Caco-2 (cell line): ENCODE measurements at regions of chr22 and their contacts with region 1.

Region 1: GRCh38 chr22:28930357-28931007 is 47.1 kb downstream of the ZNRF3 start:
- DNase-seq: no peak
- H3K4me3 ChIP-seq: no peak overlapping the region
- H3K4me3 Mint-ChIP-seq: peak overlapping the region; percentile 6
- H3K27ac Mint-ChIP-seq: no peak overlapping the region
- H3K4me1 ChIP-seq: peaks cover 80% of the 10 kb centered on the region
- H3K4me1 Mint-ChIP-seq: peaks cover 77% of the 10 kb centered on the region
- H3K27me3 ChIP-seq: no peaks in the 10 kb centered on the region
- H3K27me3 Mint-ChIP-seq: no peaks in the 10 kb centered on the region
- CTCF ChIP-seq: no peak

Region 2: DNA sequence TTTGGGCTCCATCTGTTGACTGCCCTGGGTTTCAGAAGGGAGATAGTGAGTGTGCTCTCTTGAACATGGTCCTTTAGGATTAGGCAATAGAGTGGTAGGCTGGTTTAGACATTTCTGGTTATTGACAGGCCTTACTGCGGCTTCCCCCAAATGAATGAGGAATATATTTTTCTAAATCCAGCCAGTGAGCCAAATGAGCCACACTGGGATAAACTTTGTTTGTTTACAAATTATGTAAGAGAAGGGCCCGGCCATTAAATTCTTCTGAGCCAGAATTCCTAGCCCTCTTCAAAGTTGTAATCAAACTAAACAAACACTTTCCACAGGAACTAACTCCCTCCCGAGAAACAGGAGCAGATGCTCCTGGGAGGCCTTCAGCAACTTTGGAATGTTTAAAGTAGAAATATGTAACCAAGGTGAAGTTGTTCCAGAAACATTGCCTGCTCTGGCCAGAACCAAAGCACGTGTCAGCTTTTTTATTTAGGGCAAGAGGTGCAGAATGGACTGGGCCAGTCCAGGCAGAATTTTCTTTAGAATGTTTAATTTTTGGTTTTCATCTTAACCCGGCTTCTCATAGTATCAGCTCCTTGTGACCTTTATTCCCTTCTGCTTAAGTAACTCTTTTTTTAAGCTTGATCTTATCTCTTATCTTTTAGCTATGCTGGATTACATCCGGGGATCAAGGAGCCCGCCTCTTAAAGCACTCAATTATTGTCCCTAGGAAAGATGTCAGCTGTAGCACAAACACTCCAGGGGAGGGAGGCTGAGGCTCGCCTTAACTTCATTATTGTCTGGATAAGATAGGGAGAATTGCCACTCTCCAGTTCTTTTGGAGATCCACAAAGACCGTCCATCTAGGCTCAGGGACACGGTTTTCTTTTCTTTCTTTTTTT is 18.5 kb before region 1 on chr22:
- CTCF ChIA-PET with region 1: no interaction called
- POLR2A ChIA-PET with region 1: no interaction called
- intact Hi-C with region 1: loop called (anchors 1 kb)
- DNase-seq: peak; percentile 87 to 94
- H3K4me3 ChIP-seq: no peak overlapping the region
- H3K4me3 Mint-ChIP-seq: peak overlapping the region; percentile 59
- H3K27ac Mint-ChIP-seq: peak overlapping the region; percentile 91
- H3K4me1 ChIP-seq: peaks cover 75% of the 10 kb centered on the region
- H3K4me1 Mint-ChIP-seq: peaks cover 52% of the 10 kb centered on the region
- H3K27me3 ChIP-seq: no peaks in the 10 kb centered on the region
- H3K27me3 Mint-ChIP-seq: no peaks in the 10 kb centered on the region
- CTCF ChIP-seq: no peak

Region 3: DNA sequence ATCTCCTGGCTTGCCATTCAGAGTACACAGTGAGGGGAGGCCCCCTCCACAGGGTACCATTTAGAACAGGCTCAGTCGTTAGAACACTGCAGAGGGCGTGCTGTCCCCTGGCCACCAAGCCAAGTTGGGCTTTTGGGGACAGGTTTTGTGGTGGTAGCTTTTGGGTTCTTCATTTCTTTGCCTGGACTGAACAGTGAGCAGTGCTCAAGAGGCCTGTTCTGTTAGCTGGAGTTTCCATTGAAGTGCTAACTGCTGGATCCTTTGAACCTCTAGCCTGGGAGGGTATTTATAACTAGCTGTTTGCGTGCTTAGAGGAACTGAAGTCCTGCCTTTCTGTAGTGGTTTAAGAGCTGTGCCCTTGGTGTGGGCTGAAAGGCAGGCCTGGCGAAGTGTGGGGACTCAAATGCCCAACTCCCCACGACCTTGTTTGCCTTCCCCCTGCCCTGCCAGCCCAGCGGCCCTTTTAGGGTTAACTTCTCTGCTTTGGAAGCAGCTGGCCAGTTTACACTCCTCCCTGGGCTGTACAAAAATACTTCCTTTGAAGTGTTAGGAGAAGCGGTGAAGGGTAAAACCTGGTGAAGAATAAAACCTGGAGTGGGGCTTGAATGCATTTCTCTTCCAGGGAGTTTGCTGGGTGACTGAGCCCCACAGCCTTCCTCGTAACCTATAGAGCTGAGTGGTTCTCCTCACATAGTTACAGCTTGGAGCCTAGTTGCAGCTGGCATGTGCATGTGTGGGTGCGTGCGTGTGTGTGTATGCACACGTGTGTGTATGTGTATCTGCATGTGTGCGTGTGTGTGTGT is 12.5 kb before region 1 on chr22:
- CTCF ChIA-PET with region 1: interaction called, 5 read pairs
- POLR2A ChIA-PET with region 1: interaction called, 11 read pairs
- intact Hi-C with region 1: no loop called
- DNase-seq: peak; percentile 69 to 71
- H3K4me3 ChIP-seq: no peak overlapping the region
- H3K4me3 Mint-ChIP-seq: peak overlapping the region; percentile 32
- H3K27ac Mint-ChIP-seq: peak overlapping the region; percentile 54
- H3K4me1 ChIP-seq: peaks cover 86% of the 10 kb centered on the region
- H3K4me1 Mint-ChIP-seq: peaks cover 64% of the 10 kb centered on the region
- H3K27me3 ChIP-seq: no peaks in the 10 kb centered on the region
- H3K27me3 Mint-ChIP-seq: no peaks in the 10 kb centered on the region
- CTCF ChIP-seq: no peak